Mammary epithelial cell (primary cell): ENCODE measurements at regions of chr9 and their contacts with region 1.

Region 1: DNA sequence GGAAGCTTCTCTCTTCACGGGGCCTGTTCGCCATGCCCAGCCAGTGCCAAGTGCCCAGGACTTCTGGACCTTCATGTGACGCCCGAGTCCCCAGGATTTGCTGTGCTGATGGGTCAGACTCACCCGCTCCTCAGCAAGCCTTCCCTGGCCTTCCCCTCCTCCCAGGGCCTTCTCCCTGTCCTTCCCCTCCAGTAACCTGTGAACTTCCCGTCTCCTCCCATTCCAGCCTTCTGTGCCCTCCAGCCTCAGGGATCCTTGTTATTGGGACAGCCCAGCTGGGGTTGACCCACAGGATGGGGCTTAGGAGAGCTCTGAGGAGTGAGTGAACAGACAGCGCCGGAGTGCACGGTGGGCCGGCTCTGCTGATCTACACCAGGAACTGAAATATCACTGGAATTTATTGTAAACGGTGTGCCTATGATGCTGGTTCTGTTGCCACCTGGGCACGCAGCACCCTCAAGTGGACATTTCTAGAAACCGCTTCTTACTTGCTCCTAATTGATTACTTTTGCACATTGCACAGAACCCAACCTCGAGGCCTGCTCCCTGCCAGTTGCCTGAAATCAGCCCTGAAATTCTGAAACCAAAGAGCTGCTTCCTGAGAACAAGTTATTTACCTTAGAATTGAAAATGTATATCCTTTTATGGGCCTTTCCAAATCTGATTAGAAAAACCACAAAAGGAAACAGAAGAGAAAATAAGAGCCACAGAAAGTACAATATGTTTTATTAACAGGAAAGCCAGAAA is 1.5 kb downstream of the SPAAR start:
- DNase-seq: peak; percentile 56
- H3K4me3 ChIP-seq: no peak overlapping the region
- H3K27ac ChIP-seq: no peak overlapping the region
- H3K4me1 ChIP-seq: peaks cover 50% of the 10 kb centered on the region
- H3K27me3 ChIP-seq: no peaks in the 10 kb centered on the region
- CTCF ChIP-seq: peak; percentile 75 to 79

Region 2: DNA sequence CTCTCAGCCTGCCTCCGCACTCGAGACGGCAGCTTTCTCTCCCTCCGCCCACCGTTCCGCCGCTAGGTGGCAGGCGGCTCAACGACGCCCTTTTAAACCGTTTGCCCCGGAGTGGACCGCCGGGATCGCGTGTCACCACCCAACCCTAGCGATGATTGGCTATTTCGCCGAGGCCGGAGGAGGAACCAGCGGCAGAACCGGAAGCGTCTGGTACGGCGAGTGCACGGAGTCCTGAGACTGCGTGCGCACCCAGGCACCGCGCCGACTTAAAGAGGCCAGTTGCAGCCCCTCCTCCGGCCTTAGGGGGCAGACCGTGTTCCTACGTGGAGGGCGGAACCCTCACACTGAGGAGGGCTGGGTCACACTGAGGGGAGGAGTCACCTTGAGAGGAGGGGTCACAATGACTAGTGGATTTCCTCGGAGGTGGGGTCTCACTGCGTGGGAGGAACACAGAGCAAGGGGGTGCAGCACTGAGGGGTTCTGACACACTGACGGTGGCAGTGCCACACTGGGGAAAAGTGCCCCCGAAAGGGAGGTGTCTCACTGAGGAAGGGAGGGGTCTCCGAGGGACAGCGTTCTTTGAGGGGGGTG is 306.7 kb before region 1 on chr9:
- CTCF ChIA-PET with region 1: no interaction called
- dilution Hi-C with region 1: no loop called
- in situ Hi-C with region 1: no loop called
- intact Hi-C with region 1: loop called (anchors 5 kb)
- DNase-seq: peak; percentile 99
- H3K4me3 ChIP-seq: peak overlapping the region; percentile 60 to 67 (median 64)
- H3K27ac ChIP-seq: peak overlapping the region; percentile 68
- H3K4me1 ChIP-seq: peaks cover 28% of the 10 kb centered on the region
- H3K27me3 ChIP-seq: no peaks in the 10 kb centered on the region
- CTCF ChIP-seq: peak; percentile 82 to 83

Region 3: GRCh38 chr9:35790385-35791296 is 120.1 kb before region 1 on chr9:
- CTCF ChIA-PET with region 1: interaction called, 9 read pairs
- dilution Hi-C with region 1: no loop called
- in situ Hi-C with region 1: no loop called
- intact Hi-C with region 1: loop called (anchors 1 kb)
- DNase-seq: peak; percentile 60
- H3K4me3 ChIP-seq: no peak overlapping the region
- H3K27ac ChIP-seq: no peak overlapping the region
- H3K4me1 ChIP-seq: peaks cover 11% of the 10 kb centered on the region
- H3K27me3 ChIP-seq: no peaks in the 10 kb centered on the region
- CTCF ChIP-seq: peak; percentile 83

Region 4: GRCh38 chr9:35805551-35805950 is 105.2 kb before region 1 on chr9:
- CTCF ChIA-PET with region 1: no interaction called
- dilution Hi-C with region 1: loop called (anchors 5 kb)
- in situ Hi-C with region 1: no loop called
- intact Hi-C with region 1: no loop called
- DNase-seq: no peak
- H3K4me3 ChIP-seq: no peak overlapping the region
- H3K27ac ChIP-seq: no peak overlapping the region
- H3K4me1 ChIP-seq: no peaks in the 10 kb centered on the region
- H3K27me3 ChIP-seq: no peaks in the 10 kb centered on the region
- CTCF ChIP-seq: no peak

Region 5: DNA sequence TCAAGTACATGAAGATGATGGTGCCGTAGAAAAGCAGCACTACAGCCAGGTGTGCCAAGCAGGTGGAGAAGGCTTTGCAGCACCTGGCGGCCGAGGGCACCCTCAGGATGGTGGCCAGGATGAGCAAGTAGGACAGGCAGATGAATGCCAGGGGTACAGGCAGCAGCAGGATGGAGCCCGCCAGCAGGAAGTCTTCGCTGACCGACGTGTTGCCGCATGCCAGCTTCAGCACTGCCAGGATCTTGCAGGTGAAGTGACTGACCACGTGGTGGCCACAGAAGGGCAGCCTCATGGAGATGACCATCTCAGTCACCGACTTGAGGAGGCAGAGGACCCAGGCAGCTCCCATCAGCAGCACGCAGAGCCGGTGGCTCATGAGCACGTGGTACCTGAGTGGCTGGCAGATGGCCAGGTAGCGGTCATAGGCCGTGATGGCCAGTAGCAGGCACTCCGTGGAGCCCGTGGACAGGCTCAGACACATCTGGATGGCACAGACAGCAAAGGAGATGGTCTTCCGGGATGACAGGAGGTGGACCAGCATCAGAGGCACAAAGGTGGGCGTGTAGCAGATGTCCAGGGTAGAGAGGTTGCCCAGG is 41.1 kb before region 1 on chr9:
- CTCF ChIA-PET with region 1: no interaction called
- dilution Hi-C with region 1: loop called (anchors 5 kb)
- in situ Hi-C with region 1: no loop called
- intact Hi-C with region 1: no loop called
- DNase-seq: peak; percentile 59
- H3K4me3 ChIP-seq: no peak overlapping the region
- H3K27ac ChIP-seq: no peak overlapping the region
- H3K4me1 ChIP-seq: peaks cover 22% of the 10 kb centered on the region
- H3K27me3 ChIP-seq: no peaks in the 10 kb centered on the region
- CTCF ChIP-seq: peak in 1 of 2 donors; percentile 17

Region 6: DNA sequence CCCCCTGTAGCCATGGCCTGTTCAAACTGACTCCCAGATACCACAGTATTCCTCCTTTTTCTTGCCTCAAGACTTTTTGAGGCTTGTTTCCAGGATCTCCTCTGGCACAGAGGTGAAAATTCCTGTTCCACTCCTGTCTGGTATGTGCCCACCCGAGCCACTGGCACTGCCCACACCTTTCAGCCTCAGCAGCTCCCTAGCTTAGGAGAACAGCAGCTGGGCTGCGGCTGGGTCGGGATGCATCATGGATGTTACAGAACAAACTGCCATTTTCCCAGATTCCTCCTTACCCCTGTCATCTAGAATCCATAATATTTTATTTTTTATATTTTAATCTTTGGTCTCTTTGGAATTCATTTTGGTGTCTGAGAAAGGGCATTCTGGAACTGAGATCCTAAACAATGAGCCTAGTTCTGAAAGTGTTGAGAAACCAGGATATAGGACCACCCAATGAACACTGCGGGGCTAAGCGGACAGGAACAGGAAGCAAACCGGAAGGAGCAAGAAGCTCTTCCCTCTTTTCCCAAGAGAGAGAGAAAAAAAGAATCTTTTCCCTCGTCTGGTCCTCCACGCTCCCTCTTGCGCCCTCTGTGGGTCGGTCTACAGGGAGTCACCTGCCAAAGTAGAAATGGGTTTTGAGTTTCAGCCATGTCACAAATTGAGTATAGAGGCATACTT is 34.7 kb after region 1 on chr9:
- CTCF ChIA-PET with region 1: no interaction called
- dilution Hi-C with region 1: no loop called
- in situ Hi-C with region 1: no loop called
- intact Hi-C with region 1: loop called (anchors 2 kb)
- DNase-seq: peak; percentile 63
- H3K4me3 ChIP-seq: peak overlapping the region; percentile 13 to 42 (median 30)
- H3K27ac ChIP-seq: no peak overlapping the region
- H3K4me1 ChIP-seq: peaks cover 6% of the 10 kb centered on the region
- H3K27me3 ChIP-seq: no peaks in the 10 kb centered on the region
- CTCF ChIP-seq: peak; percentile 91 to 95